Body of pancreas (tissue), 4 donors: ENCODE measurements at regions of chr3 and their contacts with region 1.

Region 1: GRCh38 chr3:16177962-16178627 is 3.6 kb downstream of the GALNT15 start:
- DNase-seq: peak; percentile 73 to 83 (median 76)
- ATAC-seq: peak; percentile 77
- H3K4me3 ChIP-seq: no peak overlapping the region
- H3K27ac ChIP-seq: no peak overlapping the region
- H3K4me1 ChIP-seq: peaks cover 14% of the 10 kb centered on the region
- H3K27me3 ChIP-seq: no peaks in the 10 kb centered on the region
- CTCF ChIP-seq: peak; percentile 83 to 96 (median 87)
- POLR2A ChIP-seq: no peak

Region 2: DNA sequence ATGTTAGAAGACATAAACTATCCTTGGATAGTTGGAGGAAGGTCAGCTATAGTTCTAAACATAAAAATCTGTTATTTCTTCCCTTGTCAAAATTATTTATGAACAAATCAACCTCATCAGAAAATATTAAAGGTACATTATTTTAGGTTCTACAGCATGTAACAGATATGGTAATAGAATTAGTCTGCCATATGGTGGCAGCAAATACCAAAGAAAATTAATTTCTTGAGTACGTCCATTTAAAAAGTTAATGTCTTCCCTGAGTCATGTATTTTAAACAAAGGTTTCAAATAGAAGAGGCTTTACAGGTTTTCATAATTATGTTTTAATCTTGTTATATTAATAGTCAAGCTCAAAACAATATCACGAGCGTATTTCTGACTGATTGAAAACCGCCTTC is 362.4 kb before region 1 on chr3:
- intact Hi-C with region 1: loop called (anchors 10 kb)
- DNase-seq: no peak
- ATAC-seq: peak; percentile 50
- H3K4me3 ChIP-seq: no peak overlapping the region
- H3K27ac ChIP-seq: no peak overlapping the region
- H3K4me1 ChIP-seq: peaks cover 37% of the 10 kb centered on the region
- H3K27me3 ChIP-seq: no peaks in the 10 kb centered on the region
- CTCF ChIP-seq: peak in 6 of 7 experiments; percentile 16 to 55 (median 50)
- POLR2A ChIP-seq: no peak

Region 3: GRCh38 chr3:16050641-16051467 is 127.2 kb before region 1 on chr3:
- intact Hi-C with region 1: loop called (anchors 5 kb)
- DNase-seq: no peak
- ATAC-seq: peak; percentile 33
- H3K4me3 ChIP-seq: no peak overlapping the region
- H3K27ac ChIP-seq: peak overlapping the region in 1 of 4 donors; percentile 41
- H3K4me1 ChIP-seq: peaks cover 5% of the 10 kb centered on the region
- H3K27me3 ChIP-seq: no peaks in the 10 kb centered on the region
- CTCF ChIP-seq: no peak
- POLR2A ChIP-seq: no peak